ENCODE measurements at regions of chr17 and their contacts with region 1.

Region 1: GRCh38 chr17:63709098-63709497 is 9.2 kb upstream of the LIMD2 start:
- DNase-seq: no peak
- ATAC-seq: no peak
- H3K4me3 Mint-ChIP-seq: no peak overlapping the region
- H3K27ac Mint-ChIP-seq: peak overlapping the region; percentile 44
- H3K4me1 Mint-ChIP-seq: peaks cover 52% of the 10 kb centered on the region
- H3K27me3 Mint-ChIP-seq: no peaks in the 10 kb centered on the region

Region 2: DNA sequence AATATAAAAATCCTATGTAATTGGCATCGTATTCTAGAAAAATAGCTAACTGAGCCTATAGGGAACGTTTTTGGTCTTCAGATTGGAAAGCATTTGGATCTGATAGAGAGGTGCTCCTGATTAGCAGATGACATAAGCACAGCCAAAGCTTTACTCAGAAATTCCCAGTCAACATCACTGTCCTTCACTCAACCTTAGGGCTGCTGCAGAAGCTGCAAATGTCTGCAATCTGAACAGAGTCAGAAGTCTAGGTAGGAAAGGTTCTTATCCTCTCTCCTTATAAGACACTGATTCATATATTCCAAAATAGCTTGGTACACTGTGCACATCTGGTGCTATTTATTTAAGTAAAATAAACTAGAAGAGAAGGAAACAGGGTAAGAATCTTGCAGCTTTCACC is 13.3 kb after region 1 on chr17:
- CTCF ChIA-PET with region 1: interaction called, 17 read pairs
- POLR2A ChIA-PET with region 1: no interaction called
- intact Hi-C with region 1: no loop called
- DNase-seq: no peak
- ATAC-seq: no peak
- H3K4me3 Mint-ChIP-seq: no peak overlapping the region
- H3K27ac Mint-ChIP-seq: no peak overlapping the region
- H3K4me1 Mint-ChIP-seq: peaks cover 2% of the 10 kb centered on the region
- H3K27me3 Mint-ChIP-seq: no peaks in the 10 kb centered on the region

Region 3: GRCh38 chr17:63819131-63819530 is 110.0 kb after region 1 on chr17:
- CTCF ChIA-PET with region 1: no interaction called
- POLR2A ChIA-PET with region 1: no interaction called
- intact Hi-C with region 1: no loop called
- DNase-seq: no peak
- ATAC-seq: no peak
- H3K4me3 Mint-ChIP-seq: no peak overlapping the region
- H3K27ac Mint-ChIP-seq: peak overlapping the region; percentile 63
- H3K4me1 Mint-ChIP-seq: peaks cover 13% of the 10 kb centered on the region
- H3K27me3 Mint-ChIP-seq: no peaks in the 10 kb centered on the region

Region 4: DNA sequence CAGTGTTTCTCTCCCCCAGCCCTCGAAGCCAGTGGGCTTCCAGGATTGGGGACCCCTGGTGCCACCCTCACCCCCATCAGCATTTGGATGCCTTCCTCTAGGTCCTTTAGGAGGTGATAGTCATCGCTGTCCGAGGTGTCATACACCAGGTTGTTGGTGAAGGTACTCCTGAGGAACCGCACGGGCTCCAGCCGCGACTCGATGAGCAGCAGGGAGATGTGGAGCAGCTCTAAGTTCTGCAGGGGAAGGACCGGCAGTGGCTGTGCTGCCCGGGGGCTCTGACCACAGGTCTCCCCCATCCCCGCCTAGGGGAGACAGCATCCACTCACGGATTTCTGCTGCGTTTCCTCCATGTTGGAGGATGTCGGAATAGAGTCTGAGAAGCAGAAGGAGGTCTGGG is 201.0 kb after region 1 on chr17:
- CTCF ChIA-PET with region 1: no interaction called
- POLR2A ChIA-PET with region 1: no interaction called
- intact Hi-C with region 1: no loop called
- DNase-seq: no peak
- ATAC-seq: no peak
- H3K4me3 Mint-ChIP-seq: no peak overlapping the region
- H3K27ac Mint-ChIP-seq: no peak overlapping the region
- H3K4me1 Mint-ChIP-seq: no peaks in the 10 kb centered on the region
- H3K27me3 Mint-ChIP-seq: no peaks in the 10 kb centered on the region